ENCODE measurements at regions of chr5 and their contacts with region 1.

Region 1: DNA sequence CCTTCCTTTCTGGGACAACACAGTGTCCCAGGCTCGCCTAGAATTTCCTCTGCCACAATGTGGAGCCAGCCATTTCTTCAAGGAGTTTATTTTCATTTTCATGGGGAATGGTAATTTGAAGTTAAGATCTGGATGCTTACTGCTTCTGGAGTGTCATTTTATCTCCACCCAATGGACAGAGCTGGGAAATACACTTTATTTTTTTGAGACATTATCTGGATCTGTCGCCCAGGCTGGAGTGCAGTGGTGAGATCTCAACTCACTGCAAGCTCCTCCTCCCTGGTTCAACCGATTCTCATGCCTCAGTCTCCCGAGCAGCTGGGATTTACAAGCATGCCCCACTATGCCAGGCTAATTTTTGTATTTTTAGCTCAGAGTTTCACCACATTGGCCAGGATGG is 12.7 kb upstream of the THG1L start:
- DNase-seq: peak in 3 of 7 donors; percentile 17 to 35 (median 29)
- H3K4me3 ChIP-seq: no peak overlapping the region
- H3K27ac ChIP-seq: no peak overlapping the region
- H3K4me1 ChIP-seq: peaks cover 0 to 12% of the 10 kb centered on the region in 2 donors
- H3K27me3 ChIP-seq: no peaks in the 10 kb centered on the region
- CTCF ChIP-seq: peak; percentile 17 to 86 (median 75)
- POLR2A ChIP-seq: no peak

Region 2: DNA sequence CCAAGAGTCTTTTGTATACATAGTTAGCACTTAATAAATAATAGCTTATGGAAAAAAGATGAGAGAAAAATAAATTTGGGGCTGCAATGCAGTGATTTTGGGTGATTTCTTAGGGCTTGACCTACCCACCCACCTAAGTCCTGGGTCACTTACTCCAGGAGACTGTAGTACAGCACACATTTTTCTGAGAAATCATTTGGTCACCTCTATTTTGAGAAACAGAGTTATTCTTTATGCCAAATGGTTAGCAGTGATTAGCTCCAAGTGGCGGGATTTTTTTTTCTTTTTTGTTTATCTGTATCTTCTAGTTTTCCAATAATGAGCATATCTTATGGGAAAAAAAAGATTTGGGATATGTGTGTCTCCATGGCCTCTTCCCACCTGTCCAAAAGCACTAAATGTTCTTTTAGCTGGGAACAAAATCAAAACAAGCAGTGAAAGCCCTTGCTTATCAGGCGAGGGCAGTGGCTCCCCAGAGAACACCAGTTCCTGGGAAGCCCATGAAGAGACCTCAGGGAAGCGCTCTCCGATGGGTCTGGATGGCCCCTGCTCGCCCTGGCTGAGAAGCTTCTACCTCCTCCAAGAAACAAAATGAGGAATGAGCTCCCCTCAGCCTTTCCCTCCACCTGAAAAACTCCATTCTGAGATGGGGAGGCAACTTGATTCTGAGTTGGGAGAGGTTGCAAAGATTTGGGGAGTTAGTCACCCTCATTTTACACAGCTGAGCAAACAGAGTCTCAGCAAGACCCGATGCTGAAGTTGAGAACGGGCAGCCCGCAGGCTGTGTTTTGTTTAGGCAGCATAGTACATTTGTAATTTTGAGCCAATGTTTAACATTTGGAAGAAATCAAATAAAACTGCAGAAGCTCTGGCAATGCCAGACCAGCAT is 382.7 kb before region 1 on chr5:
- intact Hi-C with region 1: loop called in 1 of 2 experiments (anchors 10 kb)
- DNase-seq: no peak
- H3K4me3 ChIP-seq: no peak overlapping the region
- H3K27ac ChIP-seq: no peak overlapping the region
- H3K4me1 ChIP-seq: no peaks in the 10 kb centered on the region
- H3K27me3 ChIP-seq: no peaks in the 10 kb centered on the region
- CTCF ChIP-seq: no peak
- POLR2A ChIP-seq: no peak

Region 3: GRCh38 chr5:157431544-157432200 is 286.8 kb before region 1 on chr5:
- intact Hi-C with region 1: loop called in 1 of 2 experiments (anchors 10 kb)
- DNase-seq: peak; percentile 27 to 57 (median 38)
- H3K4me3 ChIP-seq: no peak overlapping the region
- H3K27ac ChIP-seq: no peak overlapping the region
- H3K4me1 ChIP-seq: no peaks in the 10 kb centered on the region
- H3K27me3 ChIP-seq: no peaks in the 10 kb centered on the region
- CTCF ChIP-seq: peak; percentile 37 to 74 (median 62)
- POLR2A ChIP-seq: no peak